ENCODE measurements at regions of chr14 and their contacts with region 1.

Region 1: GRCh38 chr14:54881235-54881760 is 21.3 kb downstream of the GCH1 start:
- DNase-seq: no peak
- ATAC-seq: peak; percentile 65
- H3K4me3 Mint-ChIP-seq: peak overlapping the region; percentile 88
- H3K27ac Mint-ChIP-seq: peak overlapping the region; percentile 97
- H3K4me1 Mint-ChIP-seq: peaks cover 24% of the 10 kb centered on the region
- H3K27me3 Mint-ChIP-seq: no peaks in the 10 kb centered on the region
- CTCF ChIP-seq: no peak

Region 2: GRCh38 chr14:54857830-54858269 is 23.4 kb before region 1 on chr14:
- CTCF ChIA-PET with region 1: interaction called, 5 read pairs
- POLR2A ChIA-PET with region 1: interaction called, 5 read pairs
- intact Hi-C with region 1: loop called (anchors 1 kb)
- DNase-seq: no peak
- ATAC-seq: peak; percentile 93
- H3K4me3 Mint-ChIP-seq: peak overlapping the region; percentile 15
- H3K27ac Mint-ChIP-seq: peak overlapping the region; percentile 50
- H3K4me1 Mint-ChIP-seq: peaks cover 50% of the 10 kb centered on the region
- H3K27me3 Mint-ChIP-seq: no peaks in the 10 kb centered on the region
- CTCF ChIP-seq: no peak